ENCODE measurements at regions of chr14 and their contacts with region 1.

Region 1: GRCh38 chr14:80304238-80304732 is 93.0 kb upstream of the DIO2 start:
- DNase-seq: peak in 1 of 2 donors; percentile 30
- ATAC-seq: peak; percentile 44 to 90 (median 80)
- H3K4me3 ChIP-seq: no peak overlapping the region
- H3K27ac ChIP-seq: peak overlapping the region in 3 of 10 donors; percentile 29 to 68 (median 46)
- H3K4me1 ChIP-seq: no peaks in the 10 kb centered on the region
- H3K27me3 ChIP-seq: no peaks in the 10 kb centered on the region
- CTCF ChIP-seq: no peak

Region 2: GRCh38 chr14:80164991-80165721 is 139.1 kb before region 1 on chr14:
- intact Hi-C with region 1: no loop called
- DNase-seq: no peak
- ATAC-seq: no peak
- H3K4me3 ChIP-seq: no peak overlapping the region
- H3K27ac ChIP-seq: peak overlapping the region in 1 of 10 donors; percentile 11
- H3K4me1 ChIP-seq: peaks cover 0 to 7% (median 0%) of the 10 kb centered on the region in 9 donors
- H3K27me3 ChIP-seq: no peaks in the 10 kb centered on the region
- CTCF ChIP-seq: no peak

Region 3: DNA sequence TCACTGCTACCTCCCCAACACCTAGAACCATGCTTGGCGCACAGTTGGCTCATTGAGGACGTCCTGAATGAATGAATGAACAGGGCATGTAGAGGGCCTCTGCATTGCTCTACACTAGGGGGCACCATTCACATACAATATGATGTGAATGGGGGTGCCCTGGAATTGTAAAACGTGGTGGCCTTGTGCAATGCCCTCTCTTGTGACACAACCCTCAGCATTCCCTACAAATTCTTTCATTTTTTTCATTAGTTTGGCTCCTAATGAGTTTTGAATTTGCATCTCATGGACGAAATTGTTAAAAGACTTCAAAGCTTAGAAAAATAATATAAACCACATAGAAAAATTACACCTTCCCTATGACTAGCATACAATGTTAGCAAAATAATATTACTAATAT is 90.7 kb before region 1 on chr14:
- intact Hi-C with region 1: loop called in 1 of 10 experiments (anchors 10 kb)
- DNase-seq: no peak
- ATAC-seq: peak in 1 of 8 donors; percentile 43
- H3K4me3 ChIP-seq: no peak overlapping the region
- H3K27ac ChIP-seq: no peak overlapping the region
- H3K4me1 ChIP-seq: peaks cover 0 to 16% (median 0%) of the 10 kb centered on the region in 9 donors
- H3K27me3 ChIP-seq: no peaks in the 10 kb centered on the region
- CTCF ChIP-seq: peak in 5 of 9 donors; percentile 24 to 41 (median 30)

Region 4: DNA sequence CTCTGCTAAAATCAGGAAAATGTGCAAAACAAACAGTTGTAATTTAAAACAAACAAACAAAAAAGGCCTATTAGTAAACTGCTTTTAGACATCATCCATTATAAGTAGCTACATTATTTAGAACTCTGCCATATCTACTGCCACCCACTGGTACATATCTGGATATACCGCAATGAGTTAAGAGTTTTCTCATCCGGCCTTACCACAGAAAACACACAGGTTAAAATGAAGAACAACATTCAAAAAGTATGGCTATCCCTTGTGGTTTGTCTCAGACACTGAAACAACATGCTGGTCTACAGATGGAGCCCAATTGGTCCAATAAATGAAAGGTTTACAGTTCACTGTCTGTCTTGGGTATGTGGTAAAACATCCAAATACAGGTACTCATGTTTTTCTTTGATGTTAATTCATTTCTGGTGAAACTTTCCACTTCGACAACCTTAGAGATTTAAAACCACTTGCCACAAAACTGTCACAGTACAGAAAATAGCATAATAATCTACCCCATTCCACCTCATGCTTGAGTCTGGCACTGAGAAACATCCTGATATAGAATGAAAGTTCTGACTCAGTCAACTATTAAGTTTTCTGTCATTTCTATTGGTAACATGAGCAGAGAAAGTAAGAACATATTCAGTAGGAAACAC is 282.9 kb after region 1 on chr14:
- intact Hi-C with region 1: loop called in 1 of 10 experiments (anchors 10 kb)
- DNase-seq: no peak
- ATAC-seq: peak in 1 of 8 donors; percentile 46
- H3K4me3 ChIP-seq: no peak overlapping the region
- H3K27ac ChIP-seq: no peak overlapping the region
- H3K4me1 ChIP-seq: peaks cover 0 to 10% (median 0%) of the 10 kb centered on the region in 9 donors
- H3K27me3 ChIP-seq: no peaks in the 10 kb centered on the region
- CTCF ChIP-seq: peak in 7 of 9 donors; percentile 15 to 49 (median 34)

Region 5: GRCh38 chr14:80607430-80608190 is 303.3 kb after region 1 on chr14:
- intact Hi-C with region 1: loop called in 1 of 10 experiments (anchors 10 kb)
- DNase-seq: no peak
- ATAC-seq: no peak
- H3K4me3 ChIP-seq: no peak overlapping the region
- H3K27ac ChIP-seq: peak overlapping the region in 1 of 10 donors; percentile 26
- H3K4me1 ChIP-seq: peaks cover 0 to 10% (median 0%) of the 10 kb centered on the region in 9 donors
- H3K27me3 ChIP-seq: no peaks in the 10 kb centered on the region
- CTCF ChIP-seq: no peak

Measured in heart right ventricle (tissue), 16 donors.